Psoas muscle (tissue), 8 donors: ENCODE measurements at regions of chr19 and their contacts with region 1.

Region 1: DNA sequence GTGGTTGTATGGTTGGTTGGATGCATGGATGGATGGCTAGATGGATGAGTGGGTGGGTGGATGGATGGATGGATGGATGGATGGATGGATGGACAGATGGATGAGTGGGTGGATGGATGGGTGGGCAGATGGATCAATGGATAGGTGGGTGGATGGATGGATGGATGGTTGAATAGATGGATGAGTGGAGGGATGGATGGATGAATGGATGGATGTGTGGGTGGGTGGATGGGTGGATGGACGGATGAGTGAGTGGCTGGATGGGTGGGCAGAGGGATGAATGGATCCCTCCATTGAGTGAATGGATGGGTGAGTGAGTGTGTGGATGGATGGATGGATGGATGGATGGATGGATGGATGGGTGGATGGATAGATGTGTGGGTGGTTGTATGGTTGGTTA is 9.0 kb upstream of the NMRK2 start:
- DNase-seq: no peak
- ATAC-seq: no peak
- H3K4me3 ChIP-seq: no peak overlapping the region
- H3K27ac ChIP-seq: no peak overlapping the region
- H3K4me1 ChIP-seq: no peaks in the 10 kb centered on the region
- H3K27me3 ChIP-seq: no peaks in the 10 kb centered on the region
- CTCF ChIP-seq: no peak

Region 2: GRCh38 chr19:3945838-3946237 is 21.9 kb after region 1 on chr19:
- intact Hi-C with region 1: loop called in 1 of 2 experiments (anchors 2 kb)
- DNase-seq: no peak
- ATAC-seq: peak in 3 of 4 donors; percentile 13 to 40 (median 21)
- H3K4me3 ChIP-seq: no peak overlapping the region
- H3K27ac ChIP-seq: peak overlapping the region; percentile 99
- H3K4me1 ChIP-seq: peaks cover 16% of the 10 kb centered on the region
- H3K27me3 ChIP-seq: no peaks in the 10 kb centered on the region
- CTCF ChIP-seq: no peak